IMR-90 (cell line): ENCODE measurements at regions of chr5 and their contacts with region 1.

Region 1: GRCh38 chr5:15821506-15821905 is 321.5 kb downstream of the FBXL7 start:
- DNase-seq: peak; percentile 65
- ATAC-seq: peak; percentile 86
- H3K4me3 ChIP-seq: no peak overlapping the region
- H3K27ac ChIP-seq: no peak overlapping the region
- H3K4me1 ChIP-seq: peaks cover 9% of the 10 kb centered on the region
- H3K27me3 ChIP-seq: no peaks in the 10 kb centered on the region
- CTCF ChIP-seq: no peak
- POLR2A ChIP-seq: no peak
- RAD21 ChIP-seq: no peak

Region 2: DNA sequence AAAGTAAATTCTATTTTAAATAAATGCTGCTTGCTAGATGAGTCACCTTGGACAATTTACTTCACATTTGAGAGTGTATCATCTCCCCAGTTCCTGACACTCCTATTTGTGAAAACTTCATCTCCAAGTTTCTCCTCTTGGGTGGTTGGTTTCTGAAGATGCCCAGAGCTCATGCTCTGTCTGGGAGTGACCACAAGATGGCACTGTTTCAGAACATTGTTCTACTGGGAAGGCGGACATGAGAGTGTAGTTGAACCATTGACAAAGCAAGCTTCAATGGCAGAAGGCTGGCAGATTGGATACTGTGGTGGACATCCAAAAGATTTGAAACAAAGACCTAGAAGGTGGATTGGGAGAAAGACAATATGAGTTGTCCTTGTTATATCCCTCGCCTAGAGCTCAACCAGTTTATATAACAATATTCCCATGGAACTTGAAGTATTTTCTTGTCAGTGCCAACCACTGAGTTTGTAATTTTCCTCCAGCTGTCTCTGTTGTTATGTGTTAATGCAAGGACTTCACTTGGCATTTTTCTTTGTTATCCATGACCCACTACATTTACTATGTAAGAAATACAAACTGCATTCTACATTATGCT is 715.6 kb before region 1 on chr5:
- CTCF ChIA-PET with region 1: interaction called, 3 read pairs
- POLR2A ChIA-PET with region 1: no interaction called
- dilution Hi-C with region 1: no loop called
- in situ Hi-C with region 1: no loop called
- intact Hi-C with region 1: loop called (anchors 5 kb)
- DNase-seq: peak; percentile 54
- ATAC-seq: peak; percentile 90
- H3K4me3 ChIP-seq: no peak overlapping the region
- H3K27ac ChIP-seq: no peak overlapping the region
- H3K4me1 ChIP-seq: no peaks in the 10 kb centered on the region
- H3K27me3 ChIP-seq: peaks cover 5% of the 10 kb centered on the region; the same call in 1 of the 2 replicates
- CTCF ChIP-seq: peak; percentile 68
- POLR2A ChIP-seq: no peak
- RAD21 ChIP-seq: peak; percentile 62

Region 3: DNA sequence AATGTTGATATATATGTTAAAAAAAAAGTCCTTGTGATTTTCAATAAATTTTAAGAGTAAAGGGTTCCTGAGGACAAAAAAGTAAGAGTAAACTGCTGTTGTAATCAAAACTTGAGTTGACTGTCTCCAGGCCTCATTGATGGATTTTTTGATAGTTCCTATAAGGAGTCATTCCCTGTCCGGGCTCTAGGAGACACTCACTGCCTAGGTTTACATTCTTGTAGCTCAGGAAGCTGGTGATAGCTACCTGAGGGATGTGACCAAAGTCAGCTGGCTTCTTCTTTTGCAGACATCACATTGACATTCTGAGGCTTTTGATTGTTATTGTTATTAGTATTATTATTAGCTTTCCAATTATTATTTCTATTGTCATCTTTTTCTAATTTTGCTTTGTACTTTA is 438.0 kb before region 1 on chr5:
- CTCF ChIA-PET with region 1: interaction called, 5 read pairs
- POLR2A ChIA-PET with region 1: no interaction called
- dilution Hi-C with region 1: no loop called
- in situ Hi-C with region 1: no loop called
- intact Hi-C with region 1: loop called (anchors 1 kb)
- DNase-seq: peak; percentile 28
- ATAC-seq: 0 out of 2 replicates have a peak, but pooled peaks have one; percentile 40
- H3K4me3 ChIP-seq: no peak overlapping the region
- H3K27ac ChIP-seq: no peak overlapping the region
- H3K4me1 ChIP-seq: no peaks in the 10 kb centered on the region
- H3K27me3 ChIP-seq: peaks cover 3% of the 10 kb centered on the region
- CTCF ChIP-seq: peak; percentile 55
- POLR2A ChIP-seq: no peak
- RAD21 ChIP-seq: peak; percentile 71

Region 4: DNA sequence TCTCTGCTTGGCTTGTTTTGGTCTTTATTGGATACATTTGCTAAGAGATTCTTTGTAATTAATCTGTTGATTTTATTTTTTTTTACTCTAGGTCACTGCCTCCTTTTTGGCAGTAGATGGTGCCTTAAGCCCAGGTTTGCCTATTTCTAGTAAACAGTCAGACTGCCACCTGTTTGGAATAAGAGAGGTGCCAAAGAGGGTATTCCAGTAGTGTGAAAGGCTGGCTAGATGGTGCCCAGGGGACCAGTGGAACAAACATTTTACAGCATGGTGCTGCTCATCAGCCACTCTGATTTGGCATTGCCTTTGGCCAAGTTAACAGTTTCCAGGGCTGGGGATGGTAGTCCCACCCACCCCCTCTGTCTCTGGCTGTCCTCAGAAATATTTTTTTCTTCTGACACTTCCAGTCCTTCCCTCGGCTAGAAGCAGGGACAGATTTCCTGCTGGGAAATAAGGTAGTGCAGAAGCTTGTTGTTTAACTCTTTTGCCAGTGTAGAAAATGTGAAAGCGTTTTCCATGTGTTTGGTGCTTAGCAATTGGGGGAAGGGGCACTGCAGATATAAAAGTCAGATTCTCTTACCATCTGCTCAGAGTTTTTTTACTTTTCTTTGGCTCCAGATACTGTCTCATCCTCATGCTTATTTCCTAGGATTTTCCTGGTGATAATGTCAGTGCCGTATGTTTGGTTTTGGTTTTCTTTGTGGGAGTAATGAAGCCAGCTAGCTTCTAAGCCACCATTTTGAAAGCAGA is 358.1 kb before region 1 on chr5:
- CTCF ChIA-PET with region 1: interaction called, 3 read pairs
- POLR2A ChIA-PET with region 1: no interaction called
- dilution Hi-C with region 1: no loop called
- in situ Hi-C with region 1: no loop called
- intact Hi-C with region 1: loop called (anchors 2 kb)
- DNase-seq: peak; percentile 33
- ATAC-seq: peak; percentile 35; the same call in 1 of the 2 replicates
- H3K4me3 ChIP-seq: no peak overlapping the region
- H3K27ac ChIP-seq: no peak overlapping the region
- H3K4me1 ChIP-seq: no peaks in the 10 kb centered on the region
- H3K27me3 ChIP-seq: peaks cover 1% of the 10 kb centered on the region; the same call in 1 of the 2 replicates
- CTCF ChIP-seq: peak; percentile 72
- POLR2A ChIP-seq: no peak
- RAD21 ChIP-seq: peak; percentile 83

Region 5: GRCh38 chr5:15834596-15835245 is 13.2 kb after region 1 on chr5:
- CTCF ChIA-PET with region 1: interaction called, 11 read pairs
- POLR2A ChIA-PET with region 1: no interaction called
- dilution Hi-C with region 1: no loop called
- in situ Hi-C with region 1: no loop called
- intact Hi-C with region 1: no loop called
- DNase-seq: peak; percentile 91
- ATAC-seq: peak; percentile 85
- H3K4me3 ChIP-seq: no peak overlapping the region
- H3K27ac ChIP-seq: peak overlapping the region; percentile 37; the same call in 1 of the 2 replicates
- H3K4me1 ChIP-seq: peaks cover 7% of the 10 kb centered on the region
- H3K27me3 ChIP-seq: no peaks in the 10 kb centered on the region
- CTCF ChIP-seq: no peak
- POLR2A ChIP-seq: no peak
- RAD21 ChIP-seq: no peak